Heart right ventricle (tissue), 16 donors: ENCODE measurements at regions of chr1 and their contacts with region 1.

Region 1: DNA sequence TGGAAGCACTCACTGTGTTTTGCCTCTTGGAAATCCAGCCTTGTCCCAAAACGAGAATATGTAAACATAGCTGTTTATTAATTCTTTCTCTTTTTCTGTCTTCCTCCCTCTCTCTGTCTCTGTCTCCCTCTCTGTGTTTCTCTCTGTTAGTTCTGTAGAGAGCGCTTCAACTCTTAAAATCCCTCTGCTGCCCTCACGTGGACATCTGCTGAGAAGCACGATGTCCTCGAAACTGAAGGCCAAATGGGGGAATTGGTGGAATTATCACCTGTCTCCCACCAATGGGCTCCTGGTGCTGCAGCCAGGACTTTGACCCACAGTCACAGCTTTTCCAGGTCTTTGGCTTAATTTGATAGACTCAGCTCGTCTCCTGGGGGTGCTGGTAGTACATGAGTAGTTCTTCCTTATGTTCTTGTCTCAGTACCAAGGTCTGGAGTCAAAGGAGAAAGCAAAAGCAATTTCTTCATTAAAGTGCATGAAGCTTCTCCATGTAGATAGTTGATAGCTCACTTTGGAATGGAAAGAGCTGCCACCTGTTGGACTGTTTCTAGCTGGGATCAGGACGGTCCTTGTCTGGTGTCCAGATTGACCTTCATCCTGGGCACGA is 5.5 kb upstream of the GBP6 start:
- DNase-seq: peak; percentile 70 to 83
- ATAC-seq: peak; percentile 79 to 96 (median 90)
- H3K4me3 ChIP-seq: no peak overlapping the region
- H3K27ac ChIP-seq: peak overlapping the region in 4 of 10 donors; percentile 2 to 44 (median 14)
- H3K4me1 ChIP-seq: peaks cover 0 to 27% (median 6%) of the 10 kb centered on the region in 9 donors
- H3K27me3 ChIP-seq: no peaks in the 10 kb centered on the region
- CTCF ChIP-seq: peak; percentile 57 to 93 (median 85)

Region 2: GRCh38 chr1:89085781-89086180 is 272.6 kb before region 1 on chr1:
- intact Hi-C with region 1: loop called in 6 of 10 experiments (anchors 1 to 10 kb)
- DNase-seq: peak in 1 of 2 donors; percentile 76
- ATAC-seq: peak in 4 of 8 donors; percentile 67 to 82 (median 69)
- H3K4me3 ChIP-seq: no peak overlapping the region
- H3K27ac ChIP-seq: no peak overlapping the region
- H3K4me1 ChIP-seq: peaks cover 0 to 11% (median under 1%) of the 10 kb centered on the region in 9 donors
- H3K27me3 ChIP-seq: no peaks in the 10 kb centered on the region
- CTCF ChIP-seq: peak in 8 of 9 donors; percentile 60 to 91 (median 68)

Region 3: GRCh38 chr1:89149229-89149628 is 209.2 kb before region 1 on chr1:
- intact Hi-C with region 1: loop called in 1 of 10 experiments (anchors 10 kb)
- DNase-seq: no peak
- ATAC-seq: peak in 5 of 8 donors; percentile 25 to 54 (median 45)
- H3K4me3 ChIP-seq: no peak overlapping the region
- H3K27ac ChIP-seq: no peak overlapping the region
- H3K4me1 ChIP-seq: no peaks in the 10 kb centered on the region
- H3K27me3 ChIP-seq: no peaks in the 10 kb centered on the region
- CTCF ChIP-seq: peak in 6 of 9 donors; percentile 11 to 38 (median 20)

Region 4: GRCh38 chr1:89171067-89171438 is 187.3 kb before region 1 on chr1:
- intact Hi-C with region 1: no loop called
- DNase-seq: no peak
- ATAC-seq: no peak
- H3K4me3 ChIP-seq: no peak overlapping the region
- H3K27ac ChIP-seq: no peak overlapping the region
- H3K4me1 ChIP-seq: no peaks in the 10 kb centered on the region
- H3K27me3 ChIP-seq: no peaks in the 10 kb centered on the region
- CTCF ChIP-seq: no peak

Region 5: GRCh38 chr1:89198491-89199072 is 159.8 kb before region 1 on chr1 and contains the start of gene GBP4:
- intact Hi-C with region 1: loop called in 6 of 10 experiments (anchors 5 to 10 kb)
- DNase-seq: peak; percentile 37 to 53
- ATAC-seq: peak; percentile 71 to 89 (median 82)
- H3K4me3 ChIP-seq: peak within 1 kb of the TSS; percentile 51 to 72 (median 62)
- H3K27ac ChIP-seq: peak within 1 kb of the TSS; percentile 9 to 93 (median 86)
- H3K4me1 ChIP-seq: peaks cover 0 to 63% (median 47%) of the 10 kb centered on the region in 9 donors
- H3K27me3 ChIP-seq: no peaks in the 10 kb centered on the region
- CTCF ChIP-seq: no peak
- total RNA-seq, gene GBP4: 2.9 to 46.5 (median 10.4) TPM

Region 6: DNA sequence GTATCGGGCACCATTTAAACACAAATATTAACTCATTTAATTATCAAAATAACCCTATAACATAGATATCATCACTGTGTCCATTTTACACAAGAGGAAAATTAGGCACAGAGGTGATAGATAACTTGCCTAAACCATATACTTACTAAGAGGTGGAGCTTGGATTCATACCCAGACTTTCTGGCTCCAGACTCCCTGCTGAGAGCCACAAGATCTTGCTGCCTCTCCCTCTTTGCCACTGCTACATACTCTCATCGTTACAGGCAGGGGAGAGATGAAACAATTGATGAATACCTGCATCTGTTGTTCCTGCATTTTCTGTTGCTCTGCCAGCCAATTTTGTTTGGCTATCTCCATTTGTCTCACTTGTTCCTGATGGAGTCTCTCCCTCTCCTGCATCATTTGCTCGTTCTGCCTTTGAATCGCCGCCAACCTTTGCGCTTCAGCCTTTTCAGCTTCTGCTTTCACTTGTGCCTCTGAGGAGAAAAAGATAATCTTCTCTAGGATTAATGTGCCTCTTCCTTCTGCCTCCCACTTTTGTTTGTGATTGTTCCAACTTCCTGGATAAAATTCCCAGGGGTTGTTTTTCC is 96.4 kb before region 1 on chr1:
- intact Hi-C with region 1: loop called in 2 of 10 experiments (anchors 10 kb)
- DNase-seq: peak in 1 of 2 donors; percentile 39
- ATAC-seq: peak in 5 of 8 donors; percentile 54 to 69 (median 60)
- H3K4me3 ChIP-seq: peak overlapping the region in 7 of 10 donors; percentile 11 to 44 (median 32)
- H3K27ac ChIP-seq: peak overlapping the region in 7 of 10 donors; percentile 3 to 59 (median 42)
- H3K4me1 ChIP-seq: peaks cover 0 to 47% (median 31%) of the 10 kb centered on the region in 9 donors
- H3K27me3 ChIP-seq: no peaks in the 10 kb centered on the region
- CTCF ChIP-seq: no peak

Region 7: GRCh38 chr1:89454845-89455521 is 96.6 kb after region 1 on chr1:
- intact Hi-C with region 1: loop called in 3 of 10 experiments (anchors 5 to 10 kb)
- DNase-seq: peak in 1 of 2 donors; percentile 39
- ATAC-seq: peak in 1 of 8 donors; percentile 61
- H3K4me3 ChIP-seq: no peak overlapping the region
- H3K27ac ChIP-seq: no peak overlapping the region
- H3K4me1 ChIP-seq: no peaks in the 10 kb centered on the region
- H3K27me3 ChIP-seq: no peaks in the 10 kb centered on the region
- CTCF ChIP-seq: peak; percentile 53 to 81 (median 68)